IMR-90 (cell line): ENCODE measurements at regions of chr14 and their contacts with region 1.

Region 1: DNA sequence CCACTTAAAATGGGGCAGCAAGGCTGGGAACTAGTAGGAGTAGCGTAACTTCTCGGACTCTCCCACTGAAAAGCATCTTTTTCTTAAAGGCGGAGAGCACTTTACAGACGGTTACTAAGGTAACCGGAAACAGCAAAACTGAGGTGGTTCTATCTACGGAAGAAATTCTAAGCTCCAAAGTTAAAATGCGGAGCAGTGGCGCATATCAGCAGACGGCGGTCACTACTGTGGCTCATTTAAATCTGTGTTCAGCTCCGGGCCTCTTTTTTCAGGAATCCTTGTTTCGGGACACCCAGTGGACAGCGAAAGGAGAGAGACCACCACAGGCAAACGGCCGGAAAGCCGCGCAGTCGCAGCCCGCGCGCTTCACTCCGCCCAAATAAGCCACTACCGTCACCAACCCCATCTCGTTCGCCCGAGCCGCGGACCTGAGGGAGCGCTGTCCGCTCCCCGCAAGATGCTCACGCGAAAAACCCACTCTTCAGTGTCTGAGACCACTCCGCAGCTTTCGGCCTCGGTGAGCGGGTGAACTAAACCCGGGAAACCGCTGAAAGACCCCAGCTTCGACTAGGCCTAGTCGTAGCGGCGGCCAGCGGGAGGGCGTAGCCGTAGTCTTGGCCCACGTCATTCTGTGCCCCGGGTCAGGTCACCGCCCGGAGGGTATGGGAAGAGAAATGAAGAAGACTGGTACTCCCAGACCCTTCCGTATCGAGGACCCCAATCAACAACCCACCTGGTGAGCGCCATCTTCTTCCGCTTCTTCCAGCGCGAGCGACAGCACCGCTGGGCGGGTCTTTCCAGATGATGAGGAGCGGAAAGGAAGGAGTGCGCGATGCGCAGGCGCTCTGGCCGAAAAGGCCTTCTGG is at the start of gene SNW1:
- DNase-seq: peak; percentile 95
- ATAC-seq: peak; percentile 94
- H3K4me3 ChIP-seq: peak within 1 kb of the TSS; percentile 90
- H3K27ac ChIP-seq: peak within 1 kb of the TSS; percentile 74
- H3K4me1 ChIP-seq: peaks cover 2% of the 10 kb centered on the region; the same call in 1 of the 2 replicates
- H3K27me3 ChIP-seq: no peaks in the 10 kb centered on the region
- CTCF ChIP-seq: no peak; the same call in 1 of the 2 replicates
- POLR2A ChIP-seq: peak; percentile 92
- RAD21 ChIP-seq: no peak
- total RNA-seq, gene SNW1: 30.6 and 50.3 TPM in 2 replicates

Region 2: GRCh38 chr14:77799863-77800730 is 39.5 kb after region 1 on chr14 and contains the start of gene ADCK1:
- CTCF ChIA-PET with region 1: interaction called, 4 read pairs
- POLR2A ChIA-PET with region 1: no interaction called
- dilution Hi-C with region 1: no loop called
- in situ Hi-C with region 1: no loop called
- intact Hi-C with region 1: loop called (anchors 1 kb)
- DNase-seq: peak; percentile 68
- ATAC-seq: peak; percentile 88
- H3K4me3 ChIP-seq: peak within 1 kb of the TSS; percentile 61
- H3K27ac ChIP-seq: peak within 1 kb of the TSS; percentile 46
- H3K4me1 ChIP-seq: peaks cover 3% of the 10 kb centered on the region
- H3K27me3 ChIP-seq: no peaks in the 10 kb centered on the region
- CTCF ChIP-seq: peak; percentile 42
- POLR2A ChIP-seq: no peak
- RAD21 ChIP-seq: peak; percentile 16; the same call in 1 of the 2 replicates
- total RNA-seq, gene ADCK1: 1.1 and 1.6 TPM in 2 replicates

Region 3: DNA sequence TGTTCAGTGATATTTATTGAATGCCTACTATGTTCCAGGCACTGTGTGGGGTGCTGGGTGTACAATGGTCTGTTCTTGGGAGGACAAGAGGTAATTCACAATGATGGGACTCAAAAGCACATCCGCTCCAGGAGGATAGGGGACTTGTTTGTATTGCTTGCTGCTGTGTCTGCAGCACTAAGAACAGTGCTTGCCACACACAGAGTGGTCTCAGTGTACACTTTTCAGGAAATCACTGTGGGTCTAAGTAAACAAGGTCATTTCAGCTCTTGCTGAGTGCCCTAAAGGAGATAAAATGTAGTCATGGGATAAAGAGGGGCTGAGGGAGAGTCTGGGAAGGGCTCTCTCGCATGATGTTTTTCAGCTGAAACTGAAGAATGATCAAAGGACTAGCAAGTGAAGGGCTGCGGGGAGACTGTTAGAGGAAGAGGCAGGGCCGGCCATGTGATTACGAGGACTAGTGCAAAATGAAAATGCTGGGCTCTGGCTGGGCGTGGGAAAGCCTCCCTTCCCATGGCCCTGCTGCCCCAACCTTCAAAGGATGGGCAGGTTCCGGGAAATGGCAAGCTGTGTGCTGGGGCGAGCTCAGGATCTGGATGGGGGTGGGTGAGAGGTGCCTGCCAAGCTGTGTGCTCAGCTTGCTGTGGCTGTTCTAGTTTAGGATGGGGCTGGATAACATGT is 78.4 kb after region 1 on chr14:
- CTCF ChIA-PET with region 1: no interaction called
- POLR2A ChIA-PET with region 1: no interaction called
- dilution Hi-C with region 1: no loop called
- in situ Hi-C with region 1: no loop called
- intact Hi-C with region 1: no loop called
- DNase-seq: no peak
- ATAC-seq: peak; percentile 21; the same call in 1 of the 2 replicates
- H3K4me3 ChIP-seq: no peak overlapping the region
- H3K27ac ChIP-seq: no peak overlapping the region
- H3K4me1 ChIP-seq: no peaks in the 10 kb centered on the region
- H3K27me3 ChIP-seq: no peaks in the 10 kb centered on the region
- CTCF ChIP-seq: no peak
- POLR2A ChIP-seq: no peak
- RAD21 ChIP-seq: no peak

Region 4: DNA sequence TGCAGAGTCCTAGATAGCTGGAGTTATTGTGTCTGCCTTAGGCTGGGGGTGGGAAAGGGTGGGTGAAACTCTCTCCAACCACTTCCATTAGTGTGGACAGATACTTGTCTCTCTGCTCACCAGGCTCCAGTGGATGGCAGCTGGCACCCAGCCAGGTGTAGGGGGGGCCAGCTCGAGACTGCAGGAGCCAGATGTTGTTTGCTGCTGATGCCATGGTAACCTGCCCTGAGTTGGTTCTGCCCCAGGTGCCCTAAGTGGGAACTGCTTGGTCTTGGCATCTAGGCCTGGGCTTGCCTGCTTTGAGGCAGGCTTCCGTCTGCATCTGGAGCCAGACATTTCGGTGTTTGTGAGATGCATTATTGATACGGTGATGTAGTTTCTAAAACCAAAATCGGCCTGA is 121.5 kb after region 1 on chr14:
- CTCF ChIA-PET with region 1: no interaction called
- POLR2A ChIA-PET with region 1: no interaction called
- dilution Hi-C with region 1: no loop called
- in situ Hi-C with region 1: no loop called
- intact Hi-C with region 1: no loop called
- DNase-seq: no peak
- ATAC-seq: no peak
- H3K4me3 ChIP-seq: no peak overlapping the region
- H3K27ac ChIP-seq: no peak overlapping the region
- H3K4me1 ChIP-seq: no peaks in the 10 kb centered on the region
- H3K27me3 ChIP-seq: no peaks in the 10 kb centered on the region
- CTCF ChIP-seq: no peak
- POLR2A ChIP-seq: no peak
- RAD21 ChIP-seq: no peak

Region 5: DNA sequence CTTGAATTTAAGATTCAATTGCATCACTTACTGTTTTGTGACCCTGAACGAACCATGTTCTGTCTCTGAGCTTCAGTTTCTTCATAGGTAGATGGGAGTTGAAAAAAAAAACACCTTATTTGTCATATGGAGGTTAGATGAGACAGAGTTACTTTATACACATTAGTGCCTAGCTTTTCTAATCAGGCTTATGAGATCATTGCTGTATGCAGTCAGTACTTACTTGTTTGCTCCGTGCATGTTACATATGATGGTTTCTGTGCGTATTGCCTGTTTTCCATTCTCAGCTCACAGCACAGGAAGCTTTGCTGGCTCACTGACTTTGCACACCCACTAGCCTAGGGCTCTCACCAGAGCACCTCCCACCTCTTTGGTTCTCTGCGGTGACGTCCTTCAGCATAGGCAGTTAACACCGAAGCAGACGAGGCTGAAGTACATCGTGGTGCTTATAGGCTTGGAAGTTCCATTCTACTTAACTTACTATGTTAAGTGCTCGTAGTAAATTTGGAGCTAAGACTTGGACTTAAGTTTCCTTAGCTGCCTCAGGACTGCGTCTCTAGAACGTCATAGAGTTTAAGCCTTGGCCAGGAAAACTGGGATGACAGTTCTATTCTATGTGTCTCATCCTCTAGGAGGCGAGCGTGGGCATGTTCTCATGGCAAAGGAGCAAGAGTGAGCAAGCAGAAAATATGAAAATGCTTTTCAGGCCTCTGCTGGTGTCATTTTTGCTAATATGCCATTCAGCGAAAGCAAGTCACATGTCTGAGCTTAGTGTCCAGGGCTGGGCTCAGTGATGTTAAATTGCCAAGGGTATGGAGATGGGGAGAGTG is 466.8 kb after region 1 on chr14:
- CTCF ChIA-PET with region 1: no interaction called
- POLR2A ChIA-PET with region 1: no interaction called
- dilution Hi-C with region 1: no loop called
- in situ Hi-C with region 1: no loop called
- intact Hi-C with region 1: no loop called
- DNase-seq: no peak
- ATAC-seq: no peak
- H3K4me3 ChIP-seq: no peak overlapping the region
- H3K27ac ChIP-seq: no peak overlapping the region
- H3K4me1 ChIP-seq: no peaks in the 10 kb centered on the region
- H3K27me3 ChIP-seq: no peaks in the 10 kb centered on the region
- CTCF ChIP-seq: no peak
- POLR2A ChIP-seq: no peak
- RAD21 ChIP-seq: no peak

Region 6: DNA sequence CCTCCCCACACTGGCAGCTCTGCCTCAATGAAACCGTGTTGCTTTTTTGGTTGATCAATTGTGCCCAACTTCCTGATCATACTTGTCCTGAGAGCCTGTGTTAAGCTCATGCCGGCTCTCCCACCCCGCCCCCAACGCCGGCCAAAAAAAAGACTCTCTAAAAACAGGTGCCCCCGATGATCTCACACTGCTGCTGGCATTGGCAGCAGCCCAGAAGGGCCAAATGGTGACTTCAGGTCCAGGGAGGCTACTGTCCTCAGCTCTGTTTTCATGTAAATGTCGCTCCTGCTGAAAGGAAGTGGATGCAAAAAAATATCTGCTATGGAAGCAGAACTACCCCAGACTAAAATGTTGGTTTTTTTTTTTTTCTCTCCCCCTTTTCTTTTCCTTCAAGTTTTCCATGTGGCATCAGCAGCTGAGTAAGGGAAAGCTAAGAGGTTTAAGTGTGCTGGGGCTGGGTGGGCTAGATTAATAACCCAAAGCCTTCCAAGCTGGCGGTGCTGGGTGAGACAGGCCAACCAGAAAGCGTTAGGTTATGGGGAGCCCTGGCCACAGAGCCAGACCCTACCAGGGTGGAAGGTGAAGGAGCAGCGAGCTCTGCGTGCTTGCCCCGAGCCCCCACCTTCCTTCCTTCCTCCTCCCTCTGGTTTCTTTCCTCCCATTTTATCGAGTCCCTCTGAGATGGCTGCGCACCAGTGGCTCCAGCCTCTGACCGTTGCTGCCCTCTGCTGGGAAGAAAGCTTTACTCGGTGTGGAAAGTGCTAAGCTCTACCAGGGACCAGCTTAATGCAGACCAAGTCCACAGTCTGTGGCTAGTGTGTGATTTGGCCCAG is 805.6 kb after region 1 on chr14:
- CTCF ChIA-PET with region 1: no interaction called
- POLR2A ChIA-PET with region 1: no interaction called
- dilution Hi-C with region 1: no loop called
- in situ Hi-C with region 1: no loop called
- intact Hi-C with region 1: loop called (anchors 5 kb)
- DNase-seq: peak; percentile 46
- ATAC-seq: peak; percentile 99
- H3K4me3 ChIP-seq: no peak overlapping the region
- H3K27ac ChIP-seq: no peak overlapping the region
- H3K4me1 ChIP-seq: no peaks in the 10 kb centered on the region
- H3K27me3 ChIP-seq: no peaks in the 10 kb centered on the region
- CTCF ChIP-seq: peak; percentile 67
- POLR2A ChIP-seq: no peak
- RAD21 ChIP-seq: peak; percentile 68